Colonic mucosa (tissue), 4 donors: ENCODE measurements at regions of chr12 and their contacts with region 1.

Region 1: GRCh38 chr12:108722992-108723766 is 8.1 kb downstream of the CORO1C start:
- DNase-seq: no peak
- H3K4me3 ChIP-seq: no peak overlapping the region
- H3K27ac ChIP-seq: peak overlapping the region; percentile 22
- H3K4me1 ChIP-seq: peaks cover 6% of the 10 kb centered on the region
- H3K27me3 ChIP-seq: no peaks in the 10 kb centered on the region
- CTCF ChIP-seq: no peak

Region 2: DNA sequence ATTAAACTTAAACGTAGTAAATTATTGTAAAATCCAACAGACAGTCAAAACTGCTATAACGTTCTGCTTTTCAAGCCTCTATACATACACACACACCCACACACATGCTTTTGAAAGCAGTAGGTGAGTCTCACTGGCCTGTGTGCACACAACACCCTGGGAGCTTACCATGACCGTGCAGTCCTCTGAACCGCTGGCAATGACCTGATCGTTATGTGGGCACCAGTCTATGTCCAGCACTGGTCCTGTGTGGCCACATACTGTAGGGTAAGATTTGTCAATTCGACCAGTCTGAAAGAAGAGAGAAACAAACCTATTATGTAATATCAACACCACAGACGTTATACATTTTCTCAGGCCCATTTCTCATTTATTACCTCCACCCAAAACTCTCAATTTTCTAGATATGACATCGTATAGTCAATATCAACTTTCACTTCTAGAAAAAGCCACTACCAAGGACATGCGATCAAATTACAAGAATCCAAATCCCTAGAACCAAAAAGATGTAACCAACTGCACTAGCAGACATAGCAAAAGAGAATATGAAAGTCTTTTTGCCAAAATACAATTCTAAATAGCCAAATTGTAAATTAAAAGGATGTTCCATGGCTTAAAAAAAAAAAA is 45.0 kb before region 1 on chr12:
- intact Hi-C with region 1: loop called (anchors 10 kb)
- DNase-seq: no peak
- H3K4me3 ChIP-seq: no peak overlapping the region
- H3K27ac ChIP-seq: no peak overlapping the region
- H3K4me1 ChIP-seq: no peaks in the 10 kb centered on the region
- H3K27me3 ChIP-seq: no peaks in the 10 kb centered on the region
- CTCF ChIP-seq: no peak

Region 3: GRCh38 chr12:108803428-108804105 is 80.4 kb after region 1 on chr12:
- intact Hi-C with region 1: no loop called
- DNase-seq: peak; percentile 85
- H3K4me3 ChIP-seq: no peak overlapping the region
- H3K27ac ChIP-seq: peak overlapping the region; percentile 69
- H3K4me1 ChIP-seq: no peaks in the 10 kb centered on the region
- H3K27me3 ChIP-seq: no peaks in the 10 kb centered on the region
- CTCF ChIP-seq: peak; percentile 87